ENCODE measurements at regions of chr2 and their contacts with region 1.

Region 1: DNA sequence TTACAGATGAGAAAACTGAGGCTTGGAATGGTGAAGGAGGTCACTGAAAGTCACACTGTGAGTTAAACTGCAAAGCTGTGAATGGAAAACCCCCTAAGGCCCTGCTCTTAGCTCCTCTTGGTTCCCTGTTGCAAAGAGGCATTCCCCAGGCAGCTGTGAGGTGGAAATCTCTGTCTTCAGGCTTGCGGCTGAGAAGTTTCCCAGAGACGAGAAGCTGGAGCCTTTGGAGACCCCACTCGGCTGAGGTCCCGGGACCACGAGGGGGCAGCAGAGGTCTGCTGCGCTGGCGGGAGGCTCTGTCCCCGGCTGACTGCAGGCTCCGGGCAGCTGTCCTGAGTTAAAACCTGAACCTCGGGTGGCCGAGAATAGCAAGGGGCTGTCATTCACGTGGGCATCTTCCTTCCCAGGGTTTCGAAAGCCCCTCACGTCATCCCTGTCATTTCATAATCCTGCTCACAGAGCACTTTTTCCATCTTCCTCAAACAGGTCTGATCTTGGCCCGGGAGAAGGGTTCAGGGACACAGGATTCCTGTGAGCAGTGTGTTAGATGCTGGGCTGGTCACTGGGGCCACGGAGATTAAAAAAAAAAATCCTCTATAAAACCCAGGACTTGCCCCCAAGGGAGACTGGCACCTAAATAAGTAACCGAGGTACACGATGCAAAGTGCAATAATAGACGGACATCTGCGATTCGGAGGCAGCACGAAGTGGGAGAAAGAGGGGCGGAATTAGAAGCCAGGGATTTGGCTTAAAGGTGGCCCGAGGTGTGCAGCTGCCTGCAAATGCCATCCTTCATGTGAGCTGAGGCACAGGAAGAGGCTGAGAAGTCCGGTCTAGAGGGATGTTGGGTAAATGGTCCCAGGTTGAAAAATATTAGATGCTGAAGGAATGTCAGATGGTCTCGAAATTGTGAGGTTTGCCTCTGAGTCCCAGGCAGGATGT is 24.6 kb upstream of the ATOH8 start:
- DNase-seq: peak; percentile 80 to 88
- H3K4me3 ChIP-seq: peak overlapping the region in 1 of 3 donors; percentile 9
- H3K27ac ChIP-seq: peak overlapping the region in 1 of 2 donors; percentile 4
- H3K4me1 ChIP-seq: peaks cover 0 to 6% of the 10 kb centered on the region in 2 donors
- H3K27me3 ChIP-seq: no peaks in the 10 kb centered on the region
- CTCF ChIP-seq: peak; percentile 73 to 96 (median 95)
- POLR2A ChIP-seq: no peak

Region 2: GRCh38 chr2:85772841-85773491 is 43.8 kb after region 1 on chr2:
- intact Hi-C with region 1: loop called (anchors 1 kb)
- DNase-seq: no peak
- H3K4me3 ChIP-seq: peak overlapping the region; percentile 5 to 37 (median 32)
- H3K27ac ChIP-seq: peak overlapping the region; percentile 64 to 81
- H3K4me1 ChIP-seq: peaks cover 11 to 18% of the 10 kb centered on the region in 2 donors
- H3K27me3 ChIP-seq: no peaks in the 10 kb centered on the region
- CTCF ChIP-seq: no peak
- POLR2A ChIP-seq: no peak

Region 3: DNA sequence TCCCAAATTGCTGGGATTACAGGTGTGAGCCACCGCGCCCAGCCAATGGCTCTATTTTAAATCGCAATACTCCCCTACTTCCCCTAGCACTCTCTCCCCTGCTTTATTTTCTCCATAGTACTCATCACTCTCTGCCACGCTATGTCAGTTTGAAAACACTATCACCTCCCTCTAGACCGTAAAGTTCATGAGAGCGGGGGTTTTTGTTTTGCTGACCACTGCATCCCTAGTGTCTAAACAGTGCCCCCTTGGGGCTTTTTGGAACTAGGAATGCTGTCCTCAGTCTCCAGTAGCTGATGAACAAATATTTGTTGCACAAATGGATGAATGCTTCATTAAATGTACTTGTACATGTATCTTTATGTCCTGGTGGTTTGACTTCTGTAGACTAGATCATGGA is 68.8 kb after region 1 on chr2:
- intact Hi-C with region 1: no loop called
- DNase-seq: peak in 1 of 2 donors; percentile 6
- H3K4me3 ChIP-seq: no peak overlapping the region
- H3K27ac ChIP-seq: no peak overlapping the region
- H3K4me1 ChIP-seq: no peaks in the 10 kb centered on the region
- H3K27me3 ChIP-seq: no peaks in the 10 kb centered on the region
- CTCF ChIP-seq: peak in 1 of 3 donors; percentile 13
- POLR2A ChIP-seq: no peak

Region 4: GRCh38 chr2:85813982-85814801 is 85.0 kb after region 1 on chr2:
- intact Hi-C with region 1: loop called (anchors 5 kb)
- DNase-seq: peak; percentile 89 to 93
- H3K4me3 ChIP-seq: no peak overlapping the region
- H3K27ac ChIP-seq: no peak overlapping the region
- H3K4me1 ChIP-seq: no peaks in the 10 kb centered on the region
- H3K27me3 ChIP-seq: no peaks in the 10 kb centered on the region
- CTCF ChIP-seq: peak; percentile 84 to 97 (median 95)
- POLR2A ChIP-seq: no peak